HepG2 (cell line): ENCODE measurements at regions of chr18 and their contacts with region 1.

Region 1: DNA sequence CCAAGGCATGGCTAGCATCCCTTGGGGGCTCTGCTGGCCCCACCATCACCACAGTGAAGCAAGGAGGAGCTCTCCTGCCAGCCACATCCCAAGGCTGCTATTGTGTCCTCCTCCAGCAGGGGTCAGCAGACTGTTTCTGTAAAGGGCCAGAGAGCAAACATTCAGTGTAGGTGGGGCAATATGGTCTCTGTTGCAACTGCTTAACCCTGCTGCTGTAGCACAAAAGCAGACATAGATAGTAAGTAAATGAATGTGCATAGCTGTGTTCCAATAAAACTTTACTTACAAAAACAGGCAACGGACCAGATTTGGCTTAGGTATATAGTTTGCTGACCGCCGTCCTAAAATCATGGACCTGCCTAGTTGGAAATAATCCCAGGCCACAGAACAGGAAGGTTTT is 36.4 kb upstream of the ZBTB7C start:
- DNase-seq: peak; percentile 89
- ATAC-seq: peak; percentile 84
- H3K4me3 ChIP-seq: peak overlapping the region in 1 of 3 experiments; percentile 21; a peak in 1 of 6 replicates
- H3K27ac ChIP-seq: no peak overlapping the region
- H3K4me1 ChIP-seq: peaks cover 7% of the 10 kb centered on the region
- H3K27me3 ChIP-seq: peaks cover 3 to 44% of the 10 kb centered on the region in 2 experiments; a peak in 4 of 5 replicates
- CTCF ChIP-seq: peak; percentile 97
- EP300 ChIP-seq: no peak
- POLR2A ChIP-seq: no peak
- RAD21 ChIP-seq: peak; percentile 86

Region 2: DNA sequence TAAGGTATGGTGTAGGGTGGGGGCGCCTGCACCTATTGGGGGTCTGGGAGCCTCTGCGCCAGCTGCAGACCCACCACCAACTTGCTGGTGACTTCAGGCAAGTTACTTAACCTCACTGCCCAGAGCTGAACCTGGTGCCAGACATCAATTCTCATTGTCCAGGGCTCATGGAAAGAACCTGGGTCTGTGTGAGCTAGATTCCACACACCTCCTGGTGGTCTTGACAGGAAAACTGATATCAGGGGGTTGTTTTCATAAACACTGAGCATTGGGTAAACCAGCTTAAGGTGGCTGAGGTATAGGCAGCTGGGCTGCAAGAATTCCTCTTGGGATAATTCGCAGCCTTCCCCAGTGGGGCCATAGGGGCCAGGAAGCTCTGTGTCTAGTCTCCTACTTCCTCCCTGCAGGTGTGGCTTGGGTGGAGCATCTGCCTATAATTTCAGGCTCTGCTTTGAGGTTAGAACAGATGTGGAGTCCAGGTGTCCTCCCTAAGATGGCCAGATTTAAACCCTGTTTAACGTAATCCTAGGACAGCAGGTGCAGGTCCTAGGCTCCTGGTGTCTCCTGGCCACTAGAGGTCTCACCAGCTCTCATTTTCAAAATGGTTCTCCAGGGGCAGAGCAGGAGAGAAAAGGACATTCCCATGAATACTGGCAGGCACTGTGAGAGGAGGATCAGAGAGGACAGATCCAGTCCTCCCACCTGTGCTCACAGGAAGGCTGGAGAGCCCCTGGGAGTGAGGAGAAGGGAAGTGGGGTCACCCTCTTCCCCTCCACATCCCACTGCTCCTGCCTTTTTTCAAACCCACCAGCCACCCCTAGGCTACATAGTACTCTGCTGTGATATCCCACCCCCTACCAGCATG is 414.7 kb before region 1 on chr18:
- CTCF ChIA-PET with region 1: interaction called, 21 read pairs
- POLR2A ChIA-PET with region 1: no interaction called
- in situ Hi-C with region 1: loop called (anchors 5 kb)
- intact Hi-C with region 1: loop called (anchors 5 kb)
- DNase-seq: peak; percentile 48
- ATAC-seq: peak; percentile 94
- H3K4me3 ChIP-seq: no peak overlapping the region
- H3K27ac ChIP-seq: no peak overlapping the region
- H3K4me1 ChIP-seq: no peaks in the 10 kb centered on the region
- H3K27me3 ChIP-seq: peaks cover 0 to 16% of the 10 kb centered on the region in 2 experiments; a peak in 3 of 5 replicates
- CTCF ChIP-seq: peak; percentile 85
- EP300 ChIP-seq: no peak
- POLR2A ChIP-seq: no peak
- RAD21 ChIP-seq: peak; percentile 59

Region 3: DNA sequence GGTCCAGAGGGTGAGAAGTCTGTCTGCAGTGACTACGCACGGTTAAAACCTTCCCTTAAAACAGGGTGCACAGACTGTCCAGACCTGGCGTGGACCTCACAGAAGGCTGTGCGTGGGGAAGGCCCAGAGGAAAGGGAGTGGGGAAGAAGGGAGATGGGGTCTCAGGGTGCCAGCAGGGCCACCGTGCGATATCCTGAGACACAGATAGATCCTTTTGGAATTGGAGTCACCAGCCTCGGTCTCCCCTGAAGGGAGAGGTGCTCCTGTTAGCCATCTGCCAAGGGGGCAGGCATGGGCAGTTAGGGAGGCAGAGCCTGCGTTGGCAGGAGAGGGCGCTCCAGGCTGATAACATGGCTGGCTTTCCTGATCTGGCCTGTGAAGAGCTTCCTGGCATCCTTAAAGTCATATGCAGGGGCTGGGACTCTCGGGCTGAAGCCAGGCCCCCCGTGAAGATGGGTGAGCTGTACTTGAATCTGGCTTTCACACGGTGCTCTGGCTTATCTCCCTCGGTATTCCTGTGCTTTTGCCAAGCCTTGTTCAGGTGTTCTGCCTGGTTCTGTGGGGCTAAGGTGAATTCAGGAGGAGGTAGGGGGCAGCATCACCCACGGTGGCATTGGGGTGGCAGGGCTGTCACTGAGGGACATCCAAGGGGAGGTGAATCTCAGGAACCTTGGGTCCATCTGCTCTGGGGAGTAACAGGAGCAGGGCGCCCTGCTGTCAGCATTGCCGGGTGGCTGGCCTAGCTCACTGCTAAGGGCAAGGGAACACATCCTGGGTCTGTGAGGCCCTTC is 407.9 kb before region 1 on chr18:
- CTCF ChIA-PET with region 1: interaction called, 6 read pairs
- POLR2A ChIA-PET with region 1: no interaction called
- in situ Hi-C with region 1: loop called (anchors 5 kb)
- intact Hi-C with region 1: loop called (anchors 5 kb)
- DNase-seq: no peak
- ATAC-seq: peak; percentile 75
- H3K4me3 ChIP-seq: no peak overlapping the region
- H3K27ac ChIP-seq: no peak overlapping the region
- H3K4me1 ChIP-seq: no peaks in the 10 kb centered on the region
- H3K27me3 ChIP-seq: peaks cover 2 to 27% of the 10 kb centered on the region in 2 experiments; a peak in 4 of 5 replicates
- CTCF ChIP-seq: peak; percentile 54
- EP300 ChIP-seq: no peak
- POLR2A ChIP-seq: no peak
- RAD21 ChIP-seq: no peak

Region 4: GRCh38 chr18:48230467-48231113 is 214.9 kb before region 1 on chr18:
- CTCF ChIA-PET with region 1: interaction called, 10 read pairs
- POLR2A ChIA-PET with region 1: no interaction called
- in situ Hi-C with region 1: loop called (anchors 10 kb)
- intact Hi-C with region 1: no loop called
- DNase-seq: peak; percentile 57
- ATAC-seq: peak; percentile 99
- H3K4me3 ChIP-seq: no peak overlapping the region
- H3K27ac ChIP-seq: no peak overlapping the region
- H3K4me1 ChIP-seq: no peaks in the 10 kb centered on the region
- H3K27me3 ChIP-seq: peaks cover 0 to 16% of the 10 kb centered on the region in 2 experiments; a peak in 1 of 5 replicates
- CTCF ChIP-seq: peak; percentile 80
- EP300 ChIP-seq: no peak
- POLR2A ChIP-seq: no peak
- RAD21 ChIP-seq: peak; percentile 60

Region 5: DNA sequence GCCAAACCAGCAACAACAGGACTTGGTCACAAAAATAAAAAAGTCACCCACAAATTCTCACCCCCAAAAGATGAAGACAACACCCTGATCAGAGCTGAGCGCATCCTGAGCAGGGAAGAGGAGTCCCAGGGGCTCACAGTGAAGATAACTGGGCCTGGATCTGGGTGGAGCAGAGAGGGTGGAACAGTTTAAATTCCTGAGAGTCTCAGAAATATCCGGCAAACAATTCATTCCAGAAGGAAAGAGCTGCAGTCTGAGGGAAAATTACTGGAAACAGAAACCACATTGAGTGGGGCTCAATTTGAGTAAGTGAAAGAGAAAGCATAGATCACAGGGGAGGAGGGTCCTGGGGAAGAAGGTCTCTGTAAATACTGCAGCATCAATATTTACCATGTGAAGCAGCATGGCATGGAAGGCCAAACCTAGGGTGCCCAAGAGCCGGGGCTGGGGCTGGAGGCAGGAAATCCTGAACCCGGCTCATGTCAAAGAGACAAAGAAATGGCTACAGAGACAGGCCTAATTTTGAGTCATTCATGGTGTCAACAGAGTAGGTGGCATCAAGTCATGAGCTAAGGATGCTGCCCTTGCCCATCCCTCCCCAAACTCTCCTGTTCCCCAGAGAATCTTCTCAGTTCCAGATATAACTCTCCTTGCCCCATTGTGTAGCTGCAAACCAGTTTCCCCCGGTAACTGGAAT is 25.1 kb after region 1 on chr18:
- CTCF ChIA-PET with region 1: interaction called, 45 read pairs
- POLR2A ChIA-PET with region 1: no interaction called
- in situ Hi-C with region 1: no loop called
- intact Hi-C with region 1: loop called (anchors 1 kb)
- DNase-seq: peak; percentile 43
- ATAC-seq: no peak
- H3K4me3 ChIP-seq: no peak overlapping the region
- H3K27ac ChIP-seq: no peak overlapping the region
- H3K4me1 ChIP-seq: peaks cover 23% of the 10 kb centered on the region
- H3K27me3 ChIP-seq: peaks cover 2 to 11% of the 10 kb centered on the region in 2 experiments; a peak in 2 of 5 replicates
- CTCF ChIP-seq: no peak
- EP300 ChIP-seq: no peak
- POLR2A ChIP-seq: no peak
- RAD21 ChIP-seq: no peak